Activated CD4-positive, alpha-beta memory T cell treated with anti-CD3 and anti-CD28 coated beads for 36 hours (primary cell): ENCODE measurements at regions of chr2 and their contacts with region 1.

Region 1: DNA sequence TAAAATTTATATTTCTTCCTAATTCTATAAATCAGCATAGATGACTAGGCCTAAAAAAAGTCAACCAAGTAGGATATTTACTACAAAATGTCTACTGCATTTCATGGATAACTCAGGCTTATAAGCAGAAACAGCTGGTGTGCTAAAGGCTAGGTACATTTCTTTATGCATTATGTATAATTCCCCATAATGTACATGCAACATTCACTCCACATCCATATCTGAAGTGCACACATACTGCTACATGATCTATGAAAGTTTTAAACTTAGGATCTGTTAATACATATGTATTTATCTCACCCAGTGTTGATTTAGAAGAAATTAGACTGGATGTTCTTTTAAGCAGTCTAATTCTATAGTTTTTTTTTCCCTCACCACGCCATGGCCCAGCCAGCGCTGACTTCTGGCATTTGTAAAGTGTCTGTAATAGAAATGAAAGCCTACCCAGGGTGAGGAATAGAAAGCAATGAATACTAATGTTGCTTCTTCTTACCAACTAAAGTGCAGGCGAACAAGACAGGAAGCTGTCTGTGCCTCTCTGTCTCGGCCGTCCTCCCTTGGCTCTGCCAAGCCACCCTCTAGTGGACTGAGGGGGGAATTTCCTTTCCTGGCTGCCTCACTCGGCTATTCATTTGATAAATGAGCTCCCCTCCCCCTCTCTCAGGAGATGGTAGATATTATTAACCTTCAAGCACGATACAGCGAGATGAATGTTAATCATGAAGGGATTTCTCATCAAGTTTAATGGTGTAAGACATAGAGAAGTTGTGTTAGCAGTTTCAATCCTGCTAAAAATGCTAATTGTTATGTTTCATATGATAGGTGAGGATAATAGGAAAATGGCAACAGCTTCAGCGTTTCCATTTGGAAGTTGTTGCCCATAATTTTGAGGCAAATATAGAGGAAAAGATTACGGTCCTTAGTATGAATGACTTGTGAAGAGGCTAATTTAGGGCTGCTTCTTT is 384.5 kb downstream of the MTX2 start:
- DNase-seq: peak; percentile 50
- H3K4me3 Mint-ChIP-seq: no peak overlapping the region
- H3K27ac Mint-ChIP-seq: no peak overlapping the region
- H3K4me1 Mint-ChIP-seq: peaks cover 2% of the 10 kb centered on the region
- H3K27me3 Mint-ChIP-seq: peaks cover 35% of the 10 kb centered on the region

Region 2: DNA sequence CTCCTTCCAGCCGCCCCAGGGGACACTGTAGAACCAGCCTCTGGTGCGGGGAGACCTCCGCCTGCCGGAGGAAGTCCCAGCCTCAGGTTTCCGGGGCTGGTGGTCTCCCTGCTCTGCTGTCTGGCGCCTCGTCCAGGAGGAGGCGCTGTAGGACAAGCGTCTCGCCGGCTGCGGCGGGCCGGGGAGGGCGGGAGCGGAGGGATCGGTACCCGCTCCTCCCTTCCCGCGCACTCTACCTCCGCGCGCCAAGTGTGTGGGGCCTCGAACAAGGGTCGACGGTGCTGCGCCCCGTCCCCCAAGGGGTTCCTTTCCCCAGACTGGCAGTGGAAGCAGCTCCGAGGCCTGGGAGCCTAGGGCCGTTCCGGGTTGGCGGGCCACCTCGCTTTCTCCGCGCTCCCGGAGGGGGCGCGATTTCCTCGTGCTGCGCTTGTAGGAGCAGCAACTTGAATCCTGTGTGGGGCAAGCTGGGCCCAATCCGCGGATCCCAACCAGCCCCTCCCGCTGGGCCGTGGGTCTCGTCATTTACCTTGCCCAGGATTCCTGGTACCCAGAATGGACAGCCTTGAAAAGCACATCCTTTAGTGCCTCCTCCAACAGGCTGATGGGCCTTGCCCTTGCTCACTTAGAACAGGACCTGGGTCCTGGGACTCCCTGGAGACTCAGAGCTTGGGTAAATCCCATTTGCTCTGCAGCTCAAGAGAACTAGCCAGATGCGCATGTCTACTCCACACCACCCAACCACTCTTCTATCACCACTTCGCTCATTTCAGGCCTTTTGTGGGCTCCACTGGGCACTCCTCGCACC is 513.0 kb before region 1 on chr2:
- CTCF ChIA-PET with region 1: interaction called, 10 read pairs
- POLR2A ChIA-PET with region 1: no interaction called
- intact Hi-C with region 1: no loop called
- DNase-seq: peak; percentile 75
- H3K4me3 Mint-ChIP-seq: no peak overlapping the region
- H3K27ac Mint-ChIP-seq: no peak overlapping the region
- H3K4me1 Mint-ChIP-seq: peaks cover 15% of the 10 kb centered on the region
- H3K27me3 Mint-ChIP-seq: peaks cover 74% of the 10 kb centered on the region

Region 3: GRCh38 chr2:176471949-176472348 is 181.8 kb before region 1 on chr2:
- CTCF ChIA-PET with region 1: no interaction called
- POLR2A ChIA-PET with region 1: no interaction called
- intact Hi-C with region 1: no loop called
- DNase-seq: no peak
- H3K4me3 Mint-ChIP-seq: no peak overlapping the region
- H3K27ac Mint-ChIP-seq: no peak overlapping the region
- H3K4me1 Mint-ChIP-seq: peaks cover 14% of the 10 kb centered on the region
- H3K27me3 Mint-ChIP-seq: peaks cover 10% of the 10 kb centered on the region

Region 4: DNA sequence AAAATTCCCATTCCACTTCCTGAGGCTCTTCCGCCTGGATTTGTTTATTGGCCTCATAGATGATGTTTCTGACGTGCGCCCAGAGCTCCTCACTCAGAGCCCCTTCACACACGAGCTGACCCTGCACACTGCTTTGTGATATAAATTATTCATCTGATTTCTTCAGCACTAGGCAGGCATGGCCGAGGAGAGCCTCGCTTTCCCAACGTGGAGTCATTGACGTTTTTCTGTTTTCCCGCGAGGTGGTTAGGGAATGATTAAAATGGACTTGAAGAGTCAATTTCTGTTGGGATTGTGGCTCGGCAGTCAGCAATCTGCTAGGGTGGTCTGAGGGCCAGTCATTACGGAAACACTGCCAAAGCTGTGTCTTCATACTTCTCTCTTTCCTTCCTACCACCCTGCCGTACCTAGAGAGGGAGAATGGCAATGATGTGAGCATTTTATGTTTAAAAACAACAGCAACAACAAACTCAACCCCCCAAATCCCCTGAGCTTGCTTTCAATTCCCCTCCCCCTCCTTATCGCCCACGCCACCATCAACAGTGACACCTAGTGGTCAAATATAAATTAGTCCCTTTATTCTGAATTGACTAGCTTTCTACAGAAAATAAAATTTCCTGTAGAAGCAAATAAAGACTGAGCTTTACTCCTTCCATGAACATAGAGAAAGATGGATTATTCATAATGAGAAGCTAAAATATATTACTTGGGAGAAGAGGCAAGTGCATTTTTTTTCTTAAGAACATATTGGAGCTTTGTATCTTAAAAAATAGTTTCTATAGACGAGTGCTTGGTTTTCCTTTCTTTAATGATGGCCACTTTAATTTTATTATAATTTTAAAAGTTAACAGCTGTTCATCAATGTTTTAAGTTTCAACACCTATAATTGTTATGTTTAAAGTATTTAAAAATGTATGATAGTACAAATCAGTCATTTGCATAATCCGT is 99.4 kb before region 1 on chr2:
- CTCF ChIA-PET with region 1: interaction called, 10 read pairs
- POLR2A ChIA-PET with region 1: no interaction called
- intact Hi-C with region 1: no loop called
- DNase-seq: peak; percentile 36
- H3K4me3 Mint-ChIP-seq: peak overlapping the region; percentile 66
- H3K27ac Mint-ChIP-seq: no peak overlapping the region
- H3K4me1 Mint-ChIP-seq: peaks cover 9% of the 10 kb centered on the region
- H3K27me3 Mint-ChIP-seq: peaks cover 53% of the 10 kb centered on the region

Region 5: GRCh38 chr2:176664478-176664877 is 10.7 kb after region 1 on chr2:
- CTCF ChIA-PET with region 1: interaction called, 16 read pairs
- POLR2A ChIA-PET with region 1: no interaction called
- intact Hi-C with region 1: no loop called
- DNase-seq: no peak
- H3K4me3 Mint-ChIP-seq: no peak overlapping the region
- H3K27ac Mint-ChIP-seq: no peak overlapping the region
- H3K4me1 Mint-ChIP-seq: no peaks in the 10 kb centered on the region
- H3K27me3 Mint-ChIP-seq: peaks cover 28% of the 10 kb centered on the region

Region 6: DNA sequence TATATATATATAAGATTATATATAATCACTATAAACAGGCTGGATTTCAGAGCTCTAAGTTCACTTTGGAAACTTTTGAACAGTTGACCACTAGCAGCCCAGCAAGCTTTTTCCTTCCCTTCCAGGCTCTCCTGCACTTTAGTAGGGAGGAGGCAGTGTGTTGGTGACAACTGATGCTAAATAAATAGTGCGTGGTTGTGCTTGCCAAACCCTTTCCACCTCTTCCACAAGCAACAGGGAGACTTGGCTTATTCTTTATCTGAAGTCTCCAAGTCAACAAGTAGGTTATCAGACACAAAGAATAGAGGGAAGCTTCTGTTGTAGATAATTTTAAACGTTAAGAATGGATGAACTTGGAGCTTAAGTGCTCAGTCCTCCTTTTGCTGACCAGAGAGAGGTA is 150.6 kb after region 1 on chr2:
- CTCF ChIA-PET with region 1: no interaction called
- POLR2A ChIA-PET with region 1: no interaction called
- intact Hi-C with region 1: no loop called
- DNase-seq: no peak
- H3K4me3 Mint-ChIP-seq: no peak overlapping the region
- H3K27ac Mint-ChIP-seq: no peak overlapping the region
- H3K4me1 Mint-ChIP-seq: no peaks in the 10 kb centered on the region
- H3K27me3 Mint-ChIP-seq: no peaks in the 10 kb centered on the region

Region 7: GRCh38 chr2:176814306-176815052 is 160.7 kb after region 1 on chr2:
- CTCF ChIA-PET with region 1: interaction called, 5 read pairs
- POLR2A ChIA-PET with region 1: no interaction called
- intact Hi-C with region 1: loop called (anchors 1 kb)
- DNase-seq: no peak
- H3K4me3 Mint-ChIP-seq: no peak overlapping the region
- H3K27ac Mint-ChIP-seq: no peak overlapping the region
- H3K4me1 Mint-ChIP-seq: no peaks in the 10 kb centered on the region
- H3K27me3 Mint-ChIP-seq: no peaks in the 10 kb centered on the region

Region 8: DNA sequence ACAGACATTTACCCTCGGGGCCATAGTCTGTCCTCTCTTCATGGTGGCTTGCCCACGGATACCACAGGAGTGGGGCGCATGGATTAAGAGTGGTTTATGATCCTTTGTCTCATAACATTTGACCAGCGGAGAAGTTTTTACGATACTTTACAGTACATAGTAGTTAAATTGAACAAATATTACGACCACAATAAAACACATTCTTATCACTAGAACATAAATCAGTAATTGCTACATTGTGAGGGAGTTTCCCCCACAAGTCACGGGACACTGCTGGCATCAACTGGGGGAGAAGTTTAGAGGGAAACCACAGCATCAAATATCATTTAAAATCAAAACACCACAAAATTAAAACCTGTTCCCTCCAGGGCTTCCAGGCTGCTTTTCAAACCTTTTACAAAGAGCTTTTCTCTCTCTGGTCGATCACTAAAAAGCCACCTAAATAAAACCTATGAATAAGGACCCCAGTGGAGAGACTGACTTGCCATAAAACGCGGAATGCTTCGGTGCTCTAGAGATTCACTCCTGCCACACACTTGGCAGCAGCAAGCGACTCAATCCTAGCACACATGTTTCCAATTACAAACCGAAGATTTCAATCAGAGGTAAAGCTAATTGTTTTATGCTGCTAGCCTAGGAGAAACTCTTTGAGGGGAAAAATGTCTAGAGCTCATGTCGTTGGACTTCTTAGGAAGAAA is 385.2 kb after region 1 on chr2:
- CTCF ChIA-PET with region 1: no interaction called
- POLR2A ChIA-PET with region 1: no interaction called
- intact Hi-C with region 1: no loop called
- DNase-seq: no peak
- H3K4me3 Mint-ChIP-seq: no peak overlapping the region
- H3K27ac Mint-ChIP-seq: no peak overlapping the region
- H3K4me1 Mint-ChIP-seq: no peaks in the 10 kb centered on the region
- H3K27me3 Mint-ChIP-seq: peaks cover 24% of the 10 kb centered on the region

Region 9: DNA sequence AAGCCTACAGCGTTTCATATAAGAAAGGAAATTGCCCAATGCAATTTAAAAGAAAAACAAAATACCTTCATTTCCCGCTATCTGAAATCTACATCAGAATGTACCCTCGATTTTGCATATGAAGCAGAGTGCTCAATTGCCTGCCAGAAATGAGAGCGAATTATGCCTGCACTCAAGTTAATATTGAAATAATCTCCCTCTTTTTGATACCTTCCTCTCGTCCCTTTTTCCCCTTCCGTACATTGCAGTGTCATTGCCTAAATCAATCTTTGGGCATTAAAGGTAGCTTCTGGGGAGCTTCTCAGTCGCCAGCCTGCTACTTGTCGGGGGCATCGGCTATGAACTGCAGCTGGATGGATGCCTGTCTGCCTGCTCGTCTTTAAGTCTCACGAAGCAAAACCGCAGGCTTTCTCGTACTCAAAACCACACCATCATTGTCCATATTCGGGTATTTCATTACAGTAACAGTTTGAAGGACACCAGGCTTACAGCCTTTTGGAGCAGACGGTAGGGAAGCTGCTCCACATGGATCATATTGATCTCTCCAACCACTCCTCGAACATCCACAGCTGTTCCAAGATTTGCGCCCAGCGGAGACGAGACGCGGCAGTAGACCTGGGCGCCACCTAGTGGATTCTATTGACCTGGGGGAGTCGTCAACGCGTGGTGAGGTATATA is 494.9 kb after region 1 on chr2:
- CTCF ChIA-PET with region 1: interaction called, 40 read pairs
- POLR2A ChIA-PET with region 1: no interaction called
- intact Hi-C with region 1: loop called (anchors 2 kb)
- DNase-seq: peak; percentile 81
- H3K4me3 Mint-ChIP-seq: peak overlapping the region; percentile 78
- H3K27ac Mint-ChIP-seq: no peak overlapping the region
- H3K4me1 Mint-ChIP-seq: peaks cover 12% of the 10 kb centered on the region
- H3K27me3 Mint-ChIP-seq: peaks cover 20% of the 10 kb centered on the region